PC-3 (cell line): ENCODE measurements at regions of chr7 and their contacts with region 1.

Region 1: DNA sequence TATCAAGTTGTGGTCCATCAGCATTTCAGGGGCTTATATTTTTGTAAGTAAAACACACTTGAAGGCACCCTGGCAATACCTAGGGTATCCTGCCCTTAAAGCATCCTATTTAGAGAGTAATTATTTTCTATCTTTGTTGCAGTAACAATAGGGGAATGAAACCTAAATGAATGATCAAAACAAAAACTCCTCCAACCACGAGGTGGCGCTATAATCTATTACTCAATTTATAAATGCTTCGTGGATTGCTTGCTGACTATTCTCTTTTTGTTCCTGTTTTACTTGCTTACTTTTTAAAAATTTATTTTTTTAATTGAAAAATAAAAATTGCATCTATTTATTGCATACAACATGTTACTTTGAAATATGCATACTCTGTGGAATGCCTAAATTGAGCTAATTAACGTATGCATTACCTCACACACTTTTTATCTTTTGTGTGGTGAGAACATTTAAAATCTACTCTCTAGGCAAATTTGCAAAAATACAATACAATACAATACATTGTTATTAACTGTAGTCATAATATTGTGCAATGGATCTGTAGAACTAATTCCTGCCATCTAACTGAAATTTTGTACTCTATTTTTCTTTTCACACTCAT is 147.7 kb upstream of the BMPER start:
- DNase-seq: peak; percentile 72
- ATAC-seq: peak; percentile 49; the same call in 1 of the 2 replicates
- H3K4me3 ChIP-seq: no peak overlapping the region
- H3K27ac ChIP-seq: no peak overlapping the region
- H3K4me1 ChIP-seq: no peaks in the 10 kb centered on the region; the same call in 1 of the 2 replicates
- H3K27me3 ChIP-seq: no peaks in the 10 kb centered on the region
- CTCF ChIP-seq: peak; percentile 66

Region 2: DNA sequence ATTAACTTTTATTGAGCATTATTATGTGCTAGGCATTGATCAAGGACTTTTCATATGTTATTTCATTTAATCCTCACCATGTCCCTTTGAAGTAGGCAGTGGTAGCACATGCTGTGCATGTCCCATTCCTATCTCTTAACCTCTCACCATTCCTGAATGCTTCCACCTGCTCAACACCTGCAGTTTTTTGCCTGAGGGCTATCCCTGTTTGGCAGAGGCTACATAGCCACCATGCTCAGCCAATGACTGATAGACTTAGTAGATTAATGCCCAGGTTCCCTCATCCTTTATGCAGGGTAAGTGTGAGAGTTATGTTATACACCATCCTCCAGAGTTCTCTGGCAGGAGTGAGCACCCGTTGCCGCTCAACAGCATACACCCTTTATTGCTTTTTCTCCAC is 240.5 kb before region 1 on chr7:
- CTCF ChIA-PET with region 1: no interaction called
- POLR2A ChIA-PET with region 1: no interaction called
- intact Hi-C with region 1: no loop called
- DNase-seq: no peak
- ATAC-seq: no peak
- H3K4me3 ChIP-seq: no peak overlapping the region
- H3K27ac ChIP-seq: no peak overlapping the region
- H3K4me1 ChIP-seq: no peaks in the 10 kb centered on the region
- H3K27me3 ChIP-seq: no peaks in the 10 kb centered on the region
- CTCF ChIP-seq: no peak

Region 3: GRCh38 chr7:33895025-33895804 is 137.6 kb after region 1 on chr7:
- CTCF ChIA-PET with region 1: interaction called, 3 read pairs
- POLR2A ChIA-PET with region 1: no interaction called
- intact Hi-C with region 1: loop called (anchors 1 kb)
- DNase-seq: peak; percentile 79
- ATAC-seq: peak; percentile 97
- H3K4me3 ChIP-seq: no peak overlapping the region
- H3K27ac ChIP-seq: no peak overlapping the region
- H3K4me1 ChIP-seq: peaks cover 11% of the 10 kb centered on the region; the same call in 1 of the 2 replicates
- H3K27me3 ChIP-seq: 0 out of 2 replicates have a peak, but pooled peaks cover 4% of the 10 kb centered on the region
- CTCF ChIP-seq: peak; percentile 85